IMR-90 (cell line): ENCODE measurements at regions of chr12 and their contacts with region 1.

Region 1: DNA sequence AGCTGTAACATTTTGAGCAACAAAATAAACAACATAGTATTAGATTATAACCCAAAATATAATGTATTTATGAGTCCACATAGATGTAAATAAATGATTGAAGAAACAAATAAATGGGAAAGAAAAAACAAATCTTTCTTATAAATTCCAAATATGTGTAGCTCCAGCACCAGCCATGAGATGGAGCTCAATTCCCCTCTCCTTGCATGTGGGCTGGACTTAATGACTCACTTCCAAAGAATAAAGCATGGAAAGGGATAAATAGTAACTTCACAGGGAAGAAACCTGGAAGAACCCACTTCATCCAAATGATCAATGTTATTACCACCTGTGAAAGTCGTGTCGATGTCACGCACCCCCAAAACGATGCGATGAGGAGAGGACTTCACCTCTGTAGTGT is 158.7 kb downstream of the RPAP3 start:
- DNase-seq: peak; percentile 69
- ATAC-seq: peak; percentile 89
- H3K4me3 ChIP-seq: no peak overlapping the region
- H3K27ac ChIP-seq: no peak overlapping the region
- H3K4me1 ChIP-seq: no peaks in the 10 kb centered on the region
- H3K27me3 ChIP-seq: peaks cover 14% of the 10 kb centered on the region
- CTCF ChIP-seq: peak; percentile 69
- POLR2A ChIP-seq: no peak
- RAD21 ChIP-seq: peak; percentile 68

Region 2: DNA sequence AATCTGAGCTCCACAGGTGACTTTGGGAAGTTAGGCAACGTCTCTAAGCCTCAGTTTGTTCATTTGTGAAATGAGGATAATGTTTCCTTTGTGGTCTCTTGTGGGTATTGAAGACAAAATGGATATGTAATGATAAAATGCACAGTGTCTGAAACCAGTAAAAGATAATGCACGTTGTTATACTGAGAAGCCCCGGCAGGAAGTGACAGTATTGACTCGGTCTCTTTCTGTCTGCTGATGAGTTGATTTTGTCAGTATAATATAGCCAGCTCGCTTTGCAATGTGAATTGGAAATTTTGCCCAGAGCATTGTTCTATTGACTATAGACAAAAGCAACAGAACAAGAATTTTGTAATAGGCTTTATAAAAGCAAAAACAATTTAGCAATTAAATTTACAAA is 1229.0 kb before region 1 on chr12:
- CTCF ChIA-PET with region 1: no interaction called
- POLR2A ChIA-PET with region 1: no interaction called
- dilution Hi-C with region 1: no loop called
- in situ Hi-C with region 1: no loop called
- intact Hi-C with region 1: loop called (anchors 10 kb)
- DNase-seq: no peak
- ATAC-seq: no peak
- H3K4me3 ChIP-seq: no peak overlapping the region
- H3K27ac ChIP-seq: no peak overlapping the region
- H3K4me1 ChIP-seq: no peaks in the 10 kb centered on the region
- H3K27me3 ChIP-seq: no peaks in the 10 kb centered on the region
- CTCF ChIP-seq: no peak
- POLR2A ChIP-seq: no peak
- RAD21 ChIP-seq: no peak

Region 3: GRCh38 chr12:47686645-47687240 is 139.7 kb after region 1 on chr12:
- CTCF ChIA-PET with region 1: no interaction called
- POLR2A ChIA-PET with region 1: interaction called, 4 read pairs
- dilution Hi-C with region 1: no loop called
- in situ Hi-C with region 1: no loop called
- intact Hi-C with region 1: loop called (anchors 1 kb)
- DNase-seq: peak; percentile 67
- ATAC-seq: peak; percentile 97
- H3K4me3 ChIP-seq: no peak overlapping the region
- H3K27ac ChIP-seq: no peak overlapping the region
- H3K4me1 ChIP-seq: no peaks in the 10 kb centered on the region
- H3K27me3 ChIP-seq: no peaks in the 10 kb centered on the region
- CTCF ChIP-seq: peak; percentile 82
- POLR2A ChIP-seq: no peak
- RAD21 ChIP-seq: peak; percentile 86

Region 4: DNA sequence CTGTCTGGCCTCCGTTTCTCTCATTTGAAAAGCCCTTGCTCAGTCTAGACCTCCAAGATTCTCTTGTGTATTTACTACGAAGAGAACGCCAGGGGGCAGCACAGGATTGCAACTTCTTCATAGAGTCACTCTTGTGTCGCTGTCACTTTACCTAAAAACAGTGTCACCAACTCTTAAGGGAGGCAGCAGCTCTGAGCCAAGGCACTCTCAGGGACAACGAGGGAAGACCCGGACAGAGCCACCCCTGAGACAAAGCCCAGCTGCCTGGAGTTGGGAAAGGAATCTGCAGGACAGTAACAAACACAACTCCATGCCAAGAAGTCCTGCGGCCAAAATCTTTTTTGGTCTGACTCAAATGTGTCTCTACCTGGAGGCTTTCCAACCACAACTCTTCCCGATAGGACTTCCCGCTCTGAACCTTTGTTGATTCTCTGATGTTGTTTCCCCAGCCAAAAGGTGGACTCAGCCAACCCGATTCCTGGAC is 168.3 kb after region 1 on chr12:
- CTCF ChIA-PET with region 1: no interaction called
- POLR2A ChIA-PET with region 1: no interaction called
- dilution Hi-C with region 1: no loop called
- in situ Hi-C with region 1: no loop called
- intact Hi-C with region 1: no loop called
- DNase-seq: peak; percentile 71
- ATAC-seq: peak; percentile 74
- H3K4me3 ChIP-seq: no peak overlapping the region
- H3K27ac ChIP-seq: no peak overlapping the region
- H3K4me1 ChIP-seq: peaks cover 8% of the 10 kb centered on the region
- H3K27me3 ChIP-seq: no peaks in the 10 kb centered on the region
- CTCF ChIP-seq: peak; percentile 81
- POLR2A ChIP-seq: no peak
- RAD21 ChIP-seq: peak; percentile 84

Region 5: GRCh38 chr12:47773062-47773857 is 226.2 kb after region 1 on chr12 and contains the start of gene SLC48A1:
- CTCF ChIA-PET with region 1: no interaction called
- POLR2A ChIA-PET with region 1: no interaction called
- dilution Hi-C with region 1: no loop called
- in situ Hi-C with region 1: no loop called
- intact Hi-C with region 1: loop called (anchors 5 kb)
- DNase-seq: peak; percentile 46
- ATAC-seq: peak; percentile 90
- H3K4me3 ChIP-seq: peak within 1 kb of the TSS; percentile 92
- H3K27ac ChIP-seq: peak within 1 kb of the TSS; percentile 5; the same call in 1 of the 2 replicates
- H3K4me1 ChIP-seq: peaks cover 28% of the 10 kb centered on the region
- H3K27me3 ChIP-seq: no peaks in the 10 kb centered on the region
- CTCF ChIP-seq: peak; percentile 39
- POLR2A ChIP-seq: no peak
- RAD21 ChIP-seq: no peak
- total RNA-seq, gene SLC48A1: 4.4 and 4.8 TPM in 2 replicates